HepG2 (cell line): ENCODE measurements at regions of chr21 and their contacts with region 1.

Region 1: GRCh38 chr21:39445321-39446269 is at the start of gene LCA5L:
- DNase-seq: peak; percentile 76
- ATAC-seq: peak; percentile 95
- H3K4me3 ChIP-seq: peak within 1 kb of the TSS; percentile 71 to 82 (median 80)
- H3K27ac ChIP-seq: peak within 1 kb of the TSS; percentile 66
- H3K4me1 ChIP-seq: peaks cover 13% of the 10 kb centered on the region
- H3K27me3 ChIP-seq: peaks cover 0 to 2% of the 10 kb centered on the region in 2 experiments; a peak in 1 of 5 replicates
- CTCF ChIP-seq: peak; percentile 27
- EP300 ChIP-seq: peak in 1 of 2 experiments; percentile 47; a peak in 1 of 4 replicates
- POLR2A ChIP-seq: peak; percentile 40 to 91; a peak in 2 of 4 replicates
- RAD21 ChIP-seq: 0 out of 2 replicates have a peak, but pooled peaks have one; percentile 5
- total RNA-seq, gene LCA5L: 0.55 and 0.66 TPM in 2 replicates

Region 2: DNA sequence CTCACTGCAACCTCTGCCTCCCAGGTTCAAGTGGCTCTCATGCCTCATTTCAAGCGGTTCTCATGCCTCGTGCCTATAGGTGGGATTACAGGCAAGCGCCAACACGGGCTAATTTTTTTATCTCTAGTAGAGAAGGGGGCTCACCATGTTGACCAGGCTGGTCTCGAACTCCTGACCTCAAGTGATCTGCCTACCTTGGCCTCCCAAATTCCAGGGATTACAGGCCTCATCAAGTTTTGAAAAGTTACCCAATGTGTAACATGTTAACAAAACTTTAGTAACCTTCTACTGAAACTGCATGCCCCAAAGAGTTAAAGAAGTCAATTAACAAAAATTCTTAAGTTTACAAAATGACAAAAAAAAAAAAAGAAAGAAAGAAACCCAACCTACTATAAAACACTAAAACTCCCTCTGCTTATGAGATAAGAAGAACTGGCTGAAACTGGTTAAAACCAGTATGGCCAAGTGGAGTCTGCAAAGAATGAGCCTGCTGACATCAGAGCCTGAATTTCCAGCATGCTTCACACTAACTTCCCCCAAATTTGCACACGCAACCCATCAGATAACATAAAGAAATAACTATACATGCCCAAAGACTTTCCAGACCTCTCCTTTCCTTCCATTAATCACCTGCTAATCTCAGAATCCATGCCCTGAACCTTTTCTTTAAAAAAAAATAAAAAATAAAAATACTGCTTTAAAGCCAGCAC is 236.8 kb before region 1 on chr21:
- CTCF ChIA-PET with region 1: no interaction called
- POLR2A ChIA-PET with region 1: no interaction called
- in situ Hi-C with region 1: no loop called
- intact Hi-C with region 1: no loop called
- DNase-seq: no peak
- ATAC-seq: no peak
- H3K4me3 ChIP-seq: no peak overlapping the region
- H3K27ac ChIP-seq: no peak overlapping the region
- H3K4me1 ChIP-seq: no peaks in the 10 kb centered on the region
- H3K27me3 ChIP-seq: no peaks in the 10 kb centered on the region
- CTCF ChIP-seq: no peak
- EP300 ChIP-seq: no peak
- POLR2A ChIP-seq: no peak
- RAD21 ChIP-seq: no peak

Region 3: GRCh38 chr21:39336457-39337030 is 109.1 kb before region 1 on chr21:
- CTCF ChIA-PET with region 1: interaction called, 15 read pairs
- POLR2A ChIA-PET with region 1: no interaction called
- in situ Hi-C with region 1: loop called (anchors 10 kb)
- intact Hi-C with region 1: loop called (anchors 1 kb)
- DNase-seq: peak; percentile 68
- ATAC-seq: peak; percentile 97
- H3K4me3 ChIP-seq: peak overlapping the region in 1 of 3 experiments; percentile 57; a peak in 3 of 6 replicates
- H3K27ac ChIP-seq: no peak overlapping the region
- H3K4me1 ChIP-seq: peaks cover 18% of the 10 kb centered on the region
- H3K27me3 ChIP-seq: no peaks in the 10 kb centered on the region
- CTCF ChIP-seq: peak; percentile 77
- EP300 ChIP-seq: no peak
- POLR2A ChIP-seq: no peak
- RAD21 ChIP-seq: peak; percentile 66; the same call in 1 of the 2 replicates

Region 4: DNA sequence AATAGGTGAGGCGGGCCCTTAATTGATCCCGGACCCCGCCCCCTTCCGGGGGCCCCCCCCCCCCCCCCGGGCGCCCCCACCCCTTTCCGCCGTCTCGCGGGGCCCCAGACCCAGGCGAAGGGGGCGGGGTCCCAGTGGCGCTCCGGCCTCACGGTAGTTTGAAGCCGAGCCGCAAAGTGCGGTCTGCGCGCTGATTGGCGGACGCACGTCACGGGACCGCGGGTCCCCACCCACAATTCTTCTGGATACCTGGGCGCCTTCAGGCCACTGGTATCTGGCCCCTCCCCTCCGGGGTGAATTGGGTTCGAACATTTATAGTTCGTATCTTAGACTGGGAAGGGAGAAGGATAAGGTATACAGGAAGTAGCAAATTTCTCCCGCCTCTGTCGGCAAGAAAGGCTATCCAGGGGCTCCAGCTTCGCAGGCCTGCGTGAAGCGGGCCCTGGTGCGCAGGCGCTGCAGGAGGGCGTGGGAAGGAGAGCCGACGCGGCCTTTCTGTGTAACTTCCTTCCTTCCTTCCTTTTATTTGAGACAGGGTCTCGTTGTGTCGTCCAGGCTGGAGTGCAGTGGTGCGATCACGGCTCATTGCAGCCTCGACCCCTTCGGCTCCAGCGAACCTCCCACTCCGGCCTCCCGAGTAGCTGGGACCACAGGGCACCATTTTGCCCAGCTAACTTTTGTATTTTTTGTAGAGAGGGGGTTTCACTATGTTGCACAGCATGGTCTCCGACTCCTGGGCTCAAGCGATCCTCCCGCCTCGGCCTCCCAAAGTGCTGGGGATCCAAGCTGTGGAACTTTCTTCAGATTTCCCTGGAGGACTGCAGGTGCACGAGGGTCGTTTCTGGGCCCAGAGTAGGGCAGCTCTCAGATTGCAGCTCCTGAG is 96.1 kb before region 1 on chr21:
- CTCF ChIA-PET with region 1: no interaction called
- POLR2A ChIA-PET with region 1: no interaction called
- in situ Hi-C with region 1: loop called (anchors 10 kb)
- intact Hi-C with region 1: no loop called
- DNase-seq: peak; percentile 93
- ATAC-seq: peak; percentile 95
- H3K4me3 ChIP-seq: peak overlapping the region; percentile 73 to 83 (median 82)
- H3K27ac ChIP-seq: peak overlapping the region; percentile 96
- H3K4me1 ChIP-seq: peaks cover 40% of the 10 kb centered on the region
- H3K27me3 ChIP-seq: no peaks in the 10 kb centered on the region; a peak in 1 of 5 replicates
- CTCF ChIP-seq: no peak
- EP300 ChIP-seq: no peak
- POLR2A ChIP-seq: peak; percentile 56 to 91; a peak in 3 of 4 replicates
- RAD21 ChIP-seq: peak; percentile 25; the same call in 1 of the 2 replicates